ENCODE measurements at regions of chr7 and their contacts with region 1.

Region 1: GRCh38 chr7:22110227-22110839 is 164.6 kb upstream of the CDCA7L start:
- DNase-seq: peak; percentile 39 to 60 (median 42)
- H3K4me3 ChIP-seq: no peak overlapping the region
- H3K4me3 Mint-ChIP-seq: no peak overlapping the region
- H3K27ac ChIP-seq: no peak overlapping the region
- H3K27ac Mint-ChIP-seq: no peak overlapping the region
- H3K4me1 ChIP-seq: no peaks in the 10 kb centered on the region
- H3K4me1 Mint-ChIP-seq: no peaks in the 10 kb centered on the region
- H3K27me3 ChIP-seq: no peaks in the 10 kb centered on the region
- H3K27me3 Mint-ChIP-seq: peaks cover 0 to 5% (median 3%) of the 10 kb centered on the region in 3 donors
- CTCF ChIP-seq: peak; percentile 67

Region 2: DNA sequence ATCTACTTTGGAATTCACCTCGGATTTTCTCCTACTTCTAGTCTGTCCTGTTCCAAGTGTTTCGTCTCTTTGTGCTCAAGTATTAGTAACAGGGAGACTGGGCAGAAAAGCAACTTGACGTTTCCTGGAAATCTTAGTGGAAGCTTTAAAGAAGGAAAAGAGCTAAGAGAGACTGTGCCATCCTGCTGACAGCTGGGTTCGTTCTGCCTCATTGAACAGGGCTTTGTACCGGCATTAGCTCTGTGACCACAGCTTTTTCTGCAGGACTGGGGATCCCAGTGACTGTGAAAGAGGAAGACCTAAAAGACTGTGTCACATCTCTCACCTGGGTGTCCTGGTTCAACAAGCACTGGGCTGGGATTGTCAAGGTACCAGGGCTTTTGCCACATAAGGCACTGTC is 93.8 kb before region 1 on chr7:
- intact Hi-C with region 1: no loop called
- DNase-seq: no peak
- H3K4me3 ChIP-seq: no peak overlapping the region
- H3K4me3 Mint-ChIP-seq: no peak overlapping the region
- H3K27ac ChIP-seq: no peak overlapping the region
- H3K27ac Mint-ChIP-seq: no peak overlapping the region
- H3K4me1 ChIP-seq: no peaks in the 10 kb centered on the region
- H3K4me1 Mint-ChIP-seq: peaks cover 13% of the 10 kb centered on the region
- H3K27me3 ChIP-seq: no peaks in the 10 kb centered on the region
- H3K27me3 Mint-ChIP-seq: no peaks in the 10 kb centered on the region
- CTCF ChIP-seq: no peak

Region 3: GRCh38 chr7:22488643-22489462 is 378.5 kb after region 1 on chr7:
- intact Hi-C with region 1: loop called (anchors 2 kb)
- DNase-seq: peak; percentile 32 to 58 (median 57)
- H3K4me3 ChIP-seq: no peak overlapping the region
- H3K4me3 Mint-ChIP-seq: no peak overlapping the region
- H3K27ac ChIP-seq: no peak overlapping the region
- H3K27ac Mint-ChIP-seq: no peak overlapping the region
- H3K4me1 ChIP-seq: no peaks in the 10 kb centered on the region
- H3K4me1 Mint-ChIP-seq: no peaks in the 10 kb centered on the region
- H3K27me3 ChIP-seq: peaks cover 0 to 2% of the 10 kb centered on the region in 2 donors
- H3K27me3 Mint-ChIP-seq: peaks cover 0 to 15% (median 6%) of the 10 kb centered on the region in 3 donors
- CTCF ChIP-seq: peak; percentile 92

Region 4: GRCh38 chr7:22911889-22912288 is 801.6 kb after region 1 on chr7:
- intact Hi-C with region 1: no loop called
- DNase-seq: no peak
- H3K4me3 ChIP-seq: no peak overlapping the region
- H3K4me3 Mint-ChIP-seq: no peak overlapping the region
- H3K27ac ChIP-seq: no peak overlapping the region
- H3K27ac Mint-ChIP-seq: no peak overlapping the region
- H3K4me1 ChIP-seq: no peaks in the 10 kb centered on the region
- H3K4me1 Mint-ChIP-seq: no peaks in the 10 kb centered on the region
- H3K27me3 ChIP-seq: no peaks in the 10 kb centered on the region
- H3K27me3 Mint-ChIP-seq: peaks cover 0 to 4% (median 1%) of the 10 kb centered on the region in 3 donors
- CTCF ChIP-seq: no peak

Measured in CD14-positive monocyte (primary cell).